Right ventricle myocardium inferior (tissue), 1 donor: ENCODE measurements at regions of chr18 and their contacts with region 1.

Region 1: GRCh38 chr18:9913526-9914333 is at the start of gene VAPA:
- DNase-seq: peak; percentile 98
- ATAC-seq: peak; percentile 98
- total RNA-seq, gene VAPA: 203 TPM

Region 2: DNA sequence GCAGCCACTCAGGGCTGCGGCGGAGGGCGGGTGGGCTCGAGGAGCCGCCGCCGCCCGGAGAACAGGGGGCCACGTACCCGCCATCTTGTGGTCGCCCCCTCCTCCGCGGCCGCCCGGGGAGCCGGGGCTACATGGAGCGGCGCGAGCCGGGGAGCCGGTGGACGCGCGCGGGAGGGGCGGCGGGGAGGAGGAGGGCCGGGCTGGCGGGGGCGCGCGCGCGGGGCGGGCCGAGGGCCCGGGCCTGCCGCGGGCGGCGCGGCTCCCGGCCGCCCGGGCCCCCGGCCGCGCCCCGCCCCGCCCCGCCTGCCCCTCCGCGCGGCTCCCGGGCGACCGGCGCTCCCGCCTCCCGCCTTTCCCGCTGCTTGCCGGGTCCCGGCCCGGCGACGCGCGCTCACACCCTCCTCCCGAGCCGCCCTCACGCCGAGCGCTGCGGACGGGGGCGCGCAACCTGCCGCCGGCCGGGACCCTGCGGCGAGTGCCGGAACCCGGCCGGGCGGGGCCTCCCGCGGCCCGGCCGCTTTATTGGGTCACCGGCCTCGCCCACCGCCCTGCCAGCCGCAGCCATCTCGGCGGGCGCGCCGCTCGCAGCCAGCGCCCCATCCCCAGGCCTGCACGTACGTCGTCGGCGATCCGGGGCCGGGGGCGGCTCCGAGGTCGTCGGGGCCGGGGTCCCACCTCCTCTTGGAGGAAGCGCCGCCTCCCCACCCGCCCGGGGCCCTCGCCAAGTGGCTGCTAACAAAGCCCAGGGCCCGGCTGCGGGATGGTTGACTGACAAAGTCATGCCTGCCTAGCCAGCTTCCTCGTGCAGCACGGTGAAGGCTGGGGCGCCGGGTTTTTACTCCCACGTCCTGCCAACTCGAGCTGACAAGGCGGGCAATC is 299.1 kb before region 1 on chr18 and contains the start of gene PPP4R1:
- intact Hi-C with region 1: loop called (anchors 10 kb)
- DNase-seq: peak; percentile 93
- ATAC-seq: peak; percentile 78
- total RNA-seq, gene PPP4R1: 62.5 TPM

Region 3: GRCh38 chr18:9808295-9809241 is 105.2 kb before region 1 on chr18:
- intact Hi-C with region 1: loop called (anchors 2 kb)
- DNase-seq: no peak
- ATAC-seq: peak; percentile 77

Region 4: DNA sequence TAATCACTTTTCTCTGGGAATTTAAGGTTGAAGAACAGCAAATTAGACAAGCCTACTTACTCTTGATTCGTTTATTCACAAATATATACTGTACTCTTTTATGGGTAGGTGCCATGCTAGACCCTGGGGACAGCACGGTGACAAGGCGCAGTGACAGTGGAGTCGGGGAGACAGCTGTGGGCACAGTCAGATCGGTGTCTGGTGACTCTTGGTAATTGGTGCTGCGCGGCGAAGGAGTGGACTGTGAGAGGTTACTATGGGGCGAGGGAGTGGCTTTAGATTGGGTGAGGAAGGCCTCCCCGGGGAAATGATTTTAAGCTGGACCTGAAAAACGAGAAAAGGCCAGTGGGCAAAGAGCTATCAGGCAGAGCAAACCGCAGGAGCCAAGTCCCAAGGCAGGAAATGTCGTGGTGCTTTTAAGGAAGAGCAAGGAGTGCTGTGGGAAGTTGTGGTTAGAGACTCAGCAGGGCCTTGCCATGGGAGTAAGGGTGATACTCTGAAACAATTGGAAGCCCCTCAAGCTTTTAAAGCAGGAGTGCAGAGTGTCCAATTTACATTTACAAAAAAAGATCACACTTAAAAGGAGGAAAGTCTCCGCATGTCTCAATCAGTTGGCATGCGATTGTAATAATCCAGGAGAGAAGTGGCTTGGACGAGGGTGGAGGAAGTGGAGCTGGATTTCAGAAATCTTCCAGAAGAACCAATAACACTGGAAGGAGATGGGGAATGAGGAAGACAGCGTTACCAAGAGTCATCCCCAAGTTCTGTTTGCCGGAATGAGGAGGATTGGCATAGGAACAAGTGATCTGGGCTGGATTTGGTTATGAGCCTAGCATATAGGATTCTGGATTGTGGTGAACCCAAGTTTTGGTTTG is 64.1 kb before region 1 on chr18:
- intact Hi-C with region 1: loop called (anchors 10 kb)
- DNase-seq: peak; percentile 80
- ATAC-seq: peak; percentile 72

Region 5: GRCh38 chr18:9951022-9951859 is 37.5 kb after region 1 on chr18:
- intact Hi-C with region 1: loop called (anchors 5 kb)
- DNase-seq: no peak
- ATAC-seq: peak; percentile 72